B cell (primary cell): ENCODE measurements at regions of chr16 and their contacts with region 1.

Region 1: GRCh38 chr16:10509534-10510025 is 70.8 kb downstream of the EMP2 start:
- DNase-seq: peak; percentile 87
- ATAC-seq: peak; percentile 95
- H3K4me3 ChIP-seq: no peak overlapping the region
- H3K4me3 Mint-ChIP-seq: no peak overlapping the region
- H3K27ac ChIP-seq: no peak overlapping the region
- H3K27ac Mint-ChIP-seq: peak overlapping the region; percentile 75
- H3K4me1 ChIP-seq: peaks cover 4 to 10% of the 10 kb centered on the region in 2 donors
- H3K4me1 Mint-ChIP-seq: peaks cover 16% of the 10 kb centered on the region
- H3K27me3 ChIP-seq: no peaks in the 10 kb centered on the region
- H3K27me3 Mint-ChIP-seq: no peaks in the 10 kb centered on the region
- CTCF ChIP-seq: peak; percentile 84

Region 2: GRCh38 chr16:10256784-10257641 is 252.6 kb before region 1 on chr16:
- CTCF ChIA-PET with region 1: interaction called, 166 read pairs
- POLR2A ChIA-PET with region 1: no interaction called
- intact Hi-C with region 1: loop called (anchors 1 kb)
- DNase-seq: peak; percentile 83
- ATAC-seq: peak; percentile 90
- H3K4me3 ChIP-seq: peak overlapping the region in 1 of 5 experiments; percentile 18
- H3K4me3 Mint-ChIP-seq: peak overlapping the region; percentile 42
- H3K27ac ChIP-seq: peak overlapping the region in 1 of 2 donors; percentile 56
- H3K27ac Mint-ChIP-seq: peak overlapping the region; percentile 70
- H3K4me1 ChIP-seq: peaks cover 31 to 49% of the 10 kb centered on the region in 2 donors
- H3K4me1 Mint-ChIP-seq: peaks cover 45% of the 10 kb centered on the region
- H3K27me3 ChIP-seq: no peaks in the 10 kb centered on the region
- H3K27me3 Mint-ChIP-seq: no peaks in the 10 kb centered on the region
- CTCF ChIP-seq: peak; percentile 87

Region 3: DNA sequence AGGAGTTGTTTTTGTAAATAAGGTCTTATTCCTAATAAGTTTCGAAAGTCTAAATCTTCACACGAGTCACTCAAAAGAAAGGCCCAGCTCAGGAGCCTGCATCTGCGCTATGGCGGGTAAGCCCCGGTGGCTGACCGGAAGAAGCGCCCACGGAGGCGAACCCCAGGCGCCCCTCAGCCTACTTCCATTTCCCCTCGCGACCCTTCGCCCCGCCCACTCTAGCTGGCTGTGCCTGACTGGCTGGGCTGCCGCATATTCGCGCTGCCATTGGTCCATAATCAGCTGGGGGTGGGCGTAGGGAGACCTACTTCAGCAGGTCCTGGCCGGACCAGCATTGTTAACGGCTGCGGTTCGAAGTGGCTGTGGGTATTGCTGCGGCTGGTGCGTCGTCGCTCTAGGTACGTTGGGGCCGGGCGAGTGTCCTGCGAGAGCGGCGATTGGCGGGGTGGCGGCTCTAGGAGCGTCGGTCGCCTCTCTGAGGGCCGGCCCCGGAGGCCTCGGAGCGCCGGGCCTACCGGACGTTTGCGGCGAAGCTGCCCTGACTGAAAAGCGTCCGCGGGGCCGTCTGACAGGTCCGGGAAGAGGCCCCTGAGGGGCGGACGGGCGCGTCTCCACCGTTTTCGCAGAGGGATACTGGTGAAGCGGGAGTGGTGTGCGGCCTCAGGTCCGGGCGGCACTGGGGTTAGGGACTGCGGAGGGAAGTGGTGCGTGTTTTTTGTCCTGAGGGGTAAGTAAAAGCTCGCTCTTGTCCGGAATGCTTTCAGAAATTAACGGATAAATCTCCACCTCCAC is 123.7 kb before region 1 on chr16 and contains the start of gene ATF7IP2:
- CTCF ChIA-PET with region 1: interaction called, 3 read pairs
- POLR2A ChIA-PET with region 1: no interaction called
- intact Hi-C with region 1: loop called (anchors 10 kb)
- DNase-seq: peak; percentile 93
- ATAC-seq: peak; percentile 99
- H3K4me3 ChIP-seq: peak within 1 kb of the TSS; percentile 72 to 97 (median 93)
- H3K4me3 Mint-ChIP-seq: peak within 1 kb of the TSS; percentile 100
- H3K27ac ChIP-seq: peak within 1 kb of the TSS; percentile 72 to 86
- H3K27ac Mint-ChIP-seq: peak within 1 kb of the TSS; percentile 99
- H3K4me1 ChIP-seq: peaks cover 11 to 20% of the 10 kb centered on the region in 2 donors
- H3K4me1 Mint-ChIP-seq: peaks cover 45% of the 10 kb centered on the region
- H3K27me3 ChIP-seq: no peaks in the 10 kb centered on the region
- H3K27me3 Mint-ChIP-seq: no peaks in the 10 kb centered on the region
- CTCF ChIP-seq: no peak
- total RNA-seq, gene ATF7IP2: 63.7 and 67.5 TPM in 2 replicates

Region 4: GRCh38 chr16:10441726-10442125 is 67.9 kb before region 1 on chr16:
- CTCF ChIA-PET with region 1: no interaction called
- POLR2A ChIA-PET with region 1: no interaction called
- intact Hi-C with region 1: no loop called
- DNase-seq: no peak
- ATAC-seq: no peak
- H3K4me3 ChIP-seq: no peak overlapping the region
- H3K4me3 Mint-ChIP-seq: no peak overlapping the region
- H3K27ac ChIP-seq: no peak overlapping the region
- H3K27ac Mint-ChIP-seq: no peak overlapping the region
- H3K4me1 ChIP-seq: no peaks in the 10 kb centered on the region
- H3K4me1 Mint-ChIP-seq: no peaks in the 10 kb centered on the region
- H3K27me3 ChIP-seq: no peaks in the 10 kb centered on the region
- H3K27me3 Mint-ChIP-seq: no peaks in the 10 kb centered on the region
- CTCF ChIP-seq: no peak

Region 5: GRCh38 chr16:10737068-10737625 is 227.6 kb after region 1 on chr16:
- CTCF ChIA-PET with region 1: interaction called, 203 read pairs
- POLR2A ChIA-PET with region 1: interaction called, 5 read pairs
- intact Hi-C with region 1: loop called (anchors 1 kb)
- DNase-seq: peak; percentile 87
- ATAC-seq: peak; percentile 84
- H3K4me3 ChIP-seq: peak overlapping the region in 4 of 5 experiments; percentile 29 to 68 (median 46)
- H3K4me3 Mint-ChIP-seq: peak overlapping the region; percentile 80
- H3K27ac ChIP-seq: peak overlapping the region; percentile 63 to 70
- H3K27ac Mint-ChIP-seq: peak overlapping the region; percentile 85
- H3K4me1 ChIP-seq: peaks cover 23 to 29% of the 10 kb centered on the region in 2 donors
- H3K4me1 Mint-ChIP-seq: peaks cover 44% of the 10 kb centered on the region
- H3K27me3 ChIP-seq: no peaks in the 10 kb centered on the region
- H3K27me3 Mint-ChIP-seq: no peaks in the 10 kb centered on the region
- CTCF ChIP-seq: peak; percentile 96

Region 6: DNA sequence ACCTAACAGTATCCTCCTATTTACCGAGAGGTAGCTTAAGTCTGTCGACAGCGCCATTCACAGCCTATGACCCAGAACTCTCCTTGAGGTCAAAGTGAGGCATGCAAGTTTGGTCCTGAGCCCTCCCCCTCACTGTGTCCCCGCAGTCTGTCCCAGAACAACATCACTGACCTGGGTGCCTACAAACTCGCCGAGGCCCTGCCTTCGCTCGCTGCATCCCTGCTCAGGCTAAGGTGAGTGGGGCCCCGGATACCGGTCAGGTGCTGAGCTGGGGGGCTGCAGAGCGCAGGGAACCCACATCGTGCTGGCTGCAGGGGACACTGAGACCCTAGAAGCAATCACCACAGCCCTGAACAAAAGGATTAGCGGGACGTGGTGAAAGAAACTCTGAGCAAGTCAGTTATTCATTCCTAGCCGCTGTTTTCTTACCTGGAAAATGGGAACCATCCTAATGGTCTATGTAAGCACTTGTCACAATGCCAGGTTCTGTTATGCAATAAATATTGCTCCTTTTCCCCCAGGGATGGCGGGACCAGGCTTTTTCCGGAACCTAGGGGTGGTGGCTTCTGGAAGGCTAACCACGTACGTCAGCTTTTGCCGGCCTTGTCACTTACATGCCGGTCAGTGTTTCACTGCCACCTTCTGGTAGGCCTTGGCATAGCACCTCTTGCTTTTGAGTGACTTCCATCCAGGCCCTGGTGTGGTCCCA is 408.9 kb after region 1 on chr16:
- CTCF ChIA-PET with region 1: interaction called, 99 read pairs
- POLR2A ChIA-PET with region 1: no interaction called
- intact Hi-C with region 1: loop called (anchors 1 kb)
- DNase-seq: peak; percentile 91
- ATAC-seq: peak; percentile 80
- H3K4me3 ChIP-seq: no peak overlapping the region
- H3K4me3 Mint-ChIP-seq: peak overlapping the region; percentile 44
- H3K27ac ChIP-seq: peak overlapping the region; percentile 51 to 95
- H3K27ac Mint-ChIP-seq: peak overlapping the region; percentile 82
- H3K4me1 ChIP-seq: peaks cover 56 to 63% of the 10 kb centered on the region in 2 donors
- H3K4me1 Mint-ChIP-seq: peaks cover 66% of the 10 kb centered on the region
- H3K27me3 ChIP-seq: no peaks in the 10 kb centered on the region
- H3K27me3 Mint-ChIP-seq: no peaks in the 10 kb centered on the region
- CTCF ChIP-seq: peak; percentile 94